MCF 10A (cell line): ENCODE measurements at regions of chr4 and their contacts with region 1.

Region 1: GRCh38 chr4:74311696-74312313 is 3.5 kb downstream of the EPGN start:
- DNase-seq: peak; percentile 83
- H3K4me3 Mint-ChIP-seq: peak overlapping the region; percentile 47
- H3K27ac Mint-ChIP-seq: no peak overlapping the region
- H3K4me1 Mint-ChIP-seq: peaks cover 26% of the 10 kb centered on the region
- H3K27me3 Mint-ChIP-seq: no peaks in the 10 kb centered on the region
- CTCF ChIP-seq: peak; percentile 50

Region 2: GRCh38 chr4:73922766-73923630 is 388.8 kb before region 1 on chr4:
- CTCF ChIA-PET with region 1: interaction called, 3 read pairs
- POLR2A ChIA-PET with region 1: no interaction called
- intact Hi-C with region 1: loop called (anchors 10 kb)
- DNase-seq: peak; percentile 69
- H3K4me3 Mint-ChIP-seq: no peak overlapping the region
- H3K27ac Mint-ChIP-seq: no peak overlapping the region
- H3K4me1 Mint-ChIP-seq: peaks cover 26% of the 10 kb centered on the region
- H3K27me3 Mint-ChIP-seq: no peaks in the 10 kb centered on the region
- CTCF ChIP-seq: peak; percentile 53

Region 3: GRCh38 chr4:74157561-74158465 is 154.0 kb before region 1 on chr4 and contains the start of gene MTHFD2L:
- CTCF ChIA-PET with region 1: no interaction called
- POLR2A ChIA-PET with region 1: interaction called, 10 read pairs
- intact Hi-C with region 1: no loop called
- DNase-seq: peak; percentile 95
- H3K4me3 Mint-ChIP-seq: peak within 1 kb of the TSS; percentile 91
- H3K27ac Mint-ChIP-seq: peak within 1 kb of the TSS; percentile 94
- H3K4me1 Mint-ChIP-seq: peaks cover 33% of the 10 kb centered on the region
- H3K27me3 Mint-ChIP-seq: no peaks in the 10 kb centered on the region
- CTCF ChIP-seq: no peak
- total RNA-seq, gene MTHFD2L: 110 and 113 TPM in 2 replicates

Region 4: GRCh38 chr4:74228691-74229640 is 82.8 kb before region 1 on chr4:
- CTCF ChIA-PET with region 1: interaction called, 81 read pairs
- POLR2A ChIA-PET with region 1: interaction called, 132 read pairs
- intact Hi-C with region 1: loop called (anchors 1 kb)
- DNase-seq: peak; percentile 86
- H3K4me3 Mint-ChIP-seq: no peak overlapping the region
- H3K27ac Mint-ChIP-seq: no peak overlapping the region
- H3K4me1 Mint-ChIP-seq: peaks cover 28% of the 10 kb centered on the region
- H3K27me3 Mint-ChIP-seq: no peaks in the 10 kb centered on the region
- CTCF ChIP-seq: peak; percentile 81

Region 5: DNA sequence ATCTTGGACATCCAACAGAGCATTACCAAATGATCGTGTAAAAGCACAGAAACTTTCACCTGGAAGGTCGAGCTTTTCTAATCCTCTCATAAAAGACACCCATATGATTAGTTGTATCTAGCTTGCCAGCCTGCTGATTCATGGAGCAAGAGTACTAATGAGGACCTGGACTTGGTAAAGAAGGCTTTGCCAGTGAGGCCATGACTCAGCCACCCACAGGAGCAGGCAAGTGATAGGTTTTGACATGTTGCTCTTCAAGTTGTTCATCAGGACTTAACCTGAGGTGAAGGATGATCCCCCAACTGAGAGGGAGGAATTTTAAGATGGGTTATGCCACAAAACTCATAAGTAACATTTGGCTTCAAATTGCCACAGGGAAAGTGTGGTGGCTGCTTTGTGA is 28.2 kb before region 1 on chr4:
- CTCF ChIA-PET with region 1: interaction called, 8 read pairs
- POLR2A ChIA-PET with region 1: interaction called, 27 read pairs
- intact Hi-C with region 1: no loop called
- DNase-seq: peak; percentile 93
- H3K4me3 Mint-ChIP-seq: peak overlapping the region; percentile 58
- H3K27ac Mint-ChIP-seq: peak overlapping the region; percentile 81
- H3K4me1 Mint-ChIP-seq: peaks cover 21% of the 10 kb centered on the region
- H3K27me3 Mint-ChIP-seq: no peaks in the 10 kb centered on the region
- CTCF ChIP-seq: no peak